ENCODE measurements at regions of chrX and their contacts with region 1.

Region 1: DNA sequence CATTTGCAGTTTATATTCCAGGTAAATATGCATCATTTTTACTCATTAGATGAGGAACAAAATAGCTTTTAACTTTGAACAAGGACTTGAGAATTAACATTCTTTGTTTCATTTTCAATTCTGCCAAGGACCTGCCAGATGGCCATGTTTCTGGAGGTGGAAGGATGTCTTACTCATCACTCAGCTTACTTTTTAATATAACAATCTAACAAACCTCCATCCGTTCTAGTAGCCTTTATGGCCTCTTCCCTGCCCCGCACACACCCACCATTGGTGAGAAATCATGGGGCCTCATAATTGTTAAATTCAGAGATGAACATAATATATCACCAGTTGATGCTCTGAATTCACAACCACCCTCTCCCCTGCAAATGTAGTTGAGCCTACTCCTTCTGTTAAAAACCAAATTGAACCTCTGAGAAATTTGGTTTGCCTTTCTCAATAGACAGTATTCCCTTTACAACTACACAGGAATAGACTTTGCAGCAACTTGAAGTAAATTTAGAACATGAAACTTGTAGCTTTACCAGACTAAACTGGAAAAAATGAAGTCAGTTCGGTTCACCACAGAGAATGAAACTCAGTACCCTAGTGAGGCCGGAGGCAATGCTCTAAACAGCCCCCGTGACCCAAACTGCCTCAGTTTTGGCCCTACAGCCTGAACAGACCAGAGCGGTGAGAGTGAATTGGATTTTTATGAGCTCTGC is 50.1 kb upstream of the ACSL4 start:
- DNase-seq: no peak
- ATAC-seq: peak; percentile 92
- H3K4me3 ChIP-seq: no peak overlapping the region
- H3K27ac ChIP-seq: peak overlapping the region; percentile 81
- H3K4me1 ChIP-seq: peaks cover 5% of the 10 kb centered on the region; the same call in 1 of the 2 replicates
- H3K27me3 ChIP-seq: no peaks in the 10 kb centered on the region
- CTCF ChIP-seq: no peak
- EP300 ChIP-seq: no peak
- POLR2A ChIP-seq: no peak
- RAD21 ChIP-seq: no peak

Region 2: DNA sequence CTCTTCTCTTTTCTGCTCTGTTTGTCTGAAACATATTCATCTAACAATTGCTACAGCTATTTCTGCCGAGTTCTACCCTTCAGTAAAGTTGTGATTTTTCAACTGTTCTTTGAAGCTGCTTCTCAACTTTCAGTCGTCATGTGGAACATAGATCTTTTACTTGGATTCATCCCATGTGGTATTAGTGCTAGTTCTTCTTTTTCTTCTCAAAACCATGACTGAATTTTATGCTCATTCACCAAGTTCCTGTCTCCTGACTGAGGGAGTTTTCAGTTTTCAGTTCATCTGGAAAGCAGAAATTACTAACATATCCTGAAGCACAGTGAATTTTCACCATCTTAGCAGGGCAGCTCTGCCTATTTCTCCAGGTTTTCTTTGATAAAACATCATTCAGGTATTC is 62.2 kb before region 1 on chrX:
- CTCF ChIA-PET with region 1: interaction called, 3 read pairs
- POLR2A ChIA-PET with region 1: interaction called, 5 read pairs
- RAD21 ChIA-PET with region 1: interaction called, 12 read pairs
- SMC1A ChIA-PET with region 1: interaction called, 6 read pairs
- in situ Hi-C with region 1: no loop called
- intact Hi-C with region 1: no loop called
- DNase-seq: no peak
- ATAC-seq: peak; percentile 31
- H3K4me3 ChIP-seq: no peak overlapping the region
- H3K27ac ChIP-seq: no peak overlapping the region; the same call in 1 of the 2 replicates
- H3K4me1 ChIP-seq: peaks cover 10% of the 10 kb centered on the region
- H3K27me3 ChIP-seq: no peaks in the 10 kb centered on the region
- CTCF ChIP-seq: no peak
- EP300 ChIP-seq: no peak
- POLR2A ChIP-seq: no peak
- RAD21 ChIP-seq: no peak

Region 3: GRCh38 chrX:109732780-109733657 is 50.1 kb before region 1 on chrX and contains the start of gene ACSL4:
- CTCF ChIA-PET with region 1: interaction called, 3 read pairs
- POLR2A ChIA-PET with region 1: interaction called, 7 read pairs
- RAD21 ChIA-PET with region 1: interaction called, 16 read pairs
- SMC1A ChIA-PET with region 1: interaction called, 12 read pairs
- in situ Hi-C with region 1: no loop called
- intact Hi-C with region 1: loop called (anchors 2 kb)
- DNase-seq: no peak
- ATAC-seq: peak; percentile 91
- H3K4me3 ChIP-seq: peak within 1 kb of the TSS; percentile 69
- H3K27ac ChIP-seq: peak within 1 kb of the TSS; percentile 88
- H3K4me1 ChIP-seq: no peaks in the 10 kb centered on the region
- H3K27me3 ChIP-seq: no peaks in the 10 kb centered on the region
- CTCF ChIP-seq: no peak
- EP300 ChIP-seq: no peak
- POLR2A ChIP-seq: peak; percentile 84
- RAD21 ChIP-seq: no peak
- polyA plus RNA-seq, gene ACSL4: 20.7 to 23.6 TPM

Region 4: GRCh38 chrX:109751698-109752097 is 31.4 kb before region 1 on chrX:
- CTCF ChIA-PET with region 1: no interaction called
- POLR2A ChIA-PET with region 1: no interaction called
- RAD21 ChIA-PET with region 1: no interaction called
- SMC1A ChIA-PET with region 1: no interaction called
- in situ Hi-C with region 1: no loop called
- intact Hi-C with region 1: no loop called
- DNase-seq: no peak
- ATAC-seq: no peak
- H3K4me3 ChIP-seq: no peak overlapping the region
- H3K27ac ChIP-seq: no peak overlapping the region
- H3K4me1 ChIP-seq: no peaks in the 10 kb centered on the region
- H3K27me3 ChIP-seq: no peaks in the 10 kb centered on the region
- CTCF ChIP-seq: no peak
- EP300 ChIP-seq: no peak
- POLR2A ChIP-seq: no peak
- RAD21 ChIP-seq: no peak

Region 5: DNA sequence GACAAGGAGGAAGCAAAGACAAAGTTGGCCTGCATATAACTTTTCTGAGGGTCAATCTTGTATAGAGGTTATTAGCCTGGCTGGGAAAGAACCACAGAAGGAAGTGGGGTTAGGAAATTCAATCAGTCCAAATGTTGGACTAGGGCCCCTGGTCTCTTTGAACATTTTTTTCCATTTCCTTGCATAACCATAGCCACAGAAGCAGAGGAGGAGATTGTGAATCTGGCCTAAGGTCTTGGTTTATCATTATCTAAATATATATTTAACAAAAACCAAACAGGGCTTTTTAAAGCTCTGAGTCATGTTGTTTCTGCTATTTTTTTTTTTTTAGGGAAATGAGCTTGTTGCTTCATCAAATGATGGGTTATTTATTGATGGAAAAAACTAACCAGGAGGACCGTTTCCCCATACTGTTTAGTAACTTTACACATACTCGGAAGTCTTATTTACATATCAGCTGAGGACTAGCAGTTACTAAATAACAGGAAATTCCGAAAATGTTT is 47.6 kb after region 1 on chrX:
- CTCF ChIA-PET with region 1: interaction called, 10 read pairs
- POLR2A ChIA-PET with region 1: interaction called, 11 read pairs
- RAD21 ChIA-PET with region 1: interaction called, 9 read pairs
- SMC1A ChIA-PET with region 1: interaction called, 14 read pairs
- in situ Hi-C with region 1: no loop called
- intact Hi-C with region 1: no loop called
- DNase-seq: no peak
- ATAC-seq: peak; percentile 80
- H3K4me3 ChIP-seq: no peak overlapping the region
- H3K27ac ChIP-seq: no peak overlapping the region
- H3K4me1 ChIP-seq: no peaks in the 10 kb centered on the region
- H3K27me3 ChIP-seq: no peaks in the 10 kb centered on the region
- CTCF ChIP-seq: no peak
- EP300 ChIP-seq: no peak
- POLR2A ChIP-seq: no peak
- RAD21 ChIP-seq: no peak

Region 6: DNA sequence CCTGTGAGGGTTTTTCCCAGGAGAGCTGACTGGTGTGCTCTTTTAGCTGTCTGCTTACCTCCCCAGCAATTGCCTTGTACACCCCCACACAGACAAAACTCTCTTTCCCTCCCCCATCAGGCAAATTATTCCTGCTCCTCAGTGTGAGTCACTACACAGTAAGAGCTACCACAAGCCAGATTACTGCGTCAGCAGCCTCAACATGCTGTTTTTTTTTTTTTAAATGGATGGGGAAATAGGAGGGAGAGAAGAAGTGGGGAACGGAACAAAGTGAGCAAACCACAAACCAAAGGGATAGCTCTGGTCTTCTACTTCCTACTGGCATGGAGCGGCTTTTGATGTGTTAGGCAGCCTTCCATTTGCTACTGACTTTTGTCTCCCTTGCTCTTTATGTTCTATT is 57.4 kb after region 1 on chrX:
- CTCF ChIA-PET with region 1: interaction called, 4 read pairs
- POLR2A ChIA-PET with region 1: interaction called, 7 read pairs
- RAD21 ChIA-PET with region 1: interaction called, 11 read pairs
- SMC1A ChIA-PET with region 1: interaction called, 10 read pairs
- in situ Hi-C with region 1: no loop called
- intact Hi-C with region 1: no loop called
- DNase-seq: no peak
- ATAC-seq: peak; percentile 36
- H3K4me3 ChIP-seq: no peak overlapping the region
- H3K27ac ChIP-seq: no peak overlapping the region
- H3K4me1 ChIP-seq: peaks cover 6% of the 10 kb centered on the region; the same call in 1 of the 2 replicates
- H3K27me3 ChIP-seq: no peaks in the 10 kb centered on the region
- CTCF ChIP-seq: no peak
- EP300 ChIP-seq: no peak
- POLR2A ChIP-seq: no peak
- RAD21 ChIP-seq: no peak

Region 7: GRCh38 chrX:109847257-109848187 is 64.4 kb after region 1 on chrX:
- CTCF ChIA-PET with region 1: interaction called, 8 read pairs
- POLR2A ChIA-PET with region 1: interaction called, 10 read pairs
- RAD21 ChIA-PET with region 1: interaction called, 18 read pairs
- SMC1A ChIA-PET with region 1: interaction called, 8 read pairs
- in situ Hi-C with region 1: no loop called
- intact Hi-C with region 1: no loop called
- DNase-seq: no peak
- ATAC-seq: no peak
- H3K4me3 ChIP-seq: no peak overlapping the region
- H3K27ac ChIP-seq: no peak overlapping the region
- H3K4me1 ChIP-seq: peaks cover 9% of the 10 kb centered on the region
- H3K27me3 ChIP-seq: no peaks in the 10 kb centered on the region
- CTCF ChIP-seq: no peak
- EP300 ChIP-seq: no peak
- POLR2A ChIP-seq: no peak
- RAD21 ChIP-seq: no peak

Measured in GM12878 (cell line).